ENCODE measurements at regions of chr12 and their contacts with region 1.

Region 1: DNA sequence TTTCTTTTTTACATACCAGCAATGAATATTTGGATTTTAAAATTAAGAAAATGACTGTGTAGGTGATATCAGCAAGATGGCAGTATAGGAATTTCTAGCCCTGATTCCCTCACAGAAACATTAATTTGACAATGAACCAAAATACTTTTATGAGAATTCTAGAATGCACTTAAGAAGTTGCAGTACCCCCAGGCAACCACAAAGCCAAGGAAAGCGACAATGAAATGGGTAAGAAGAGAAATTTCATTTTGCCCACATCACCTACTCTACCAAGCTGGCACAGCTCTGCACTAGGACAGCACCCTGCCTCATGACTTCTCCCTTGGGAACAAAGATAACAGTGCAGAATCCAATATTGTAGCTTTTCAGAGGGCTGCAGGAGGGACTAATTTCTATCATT is 6.6 kb downstream of the OR9K2 start:
- DNase-seq: no peak
- ATAC-seq: no peak
- H3K4me3 ChIP-seq: no peak overlapping the region
- H3K4me3 Mint-ChIP-seq: no peak overlapping the region
- H3K27ac ChIP-seq: no peak overlapping the region
- H3K27ac Mint-ChIP-seq: no peak overlapping the region
- H3K4me1 ChIP-seq: no peaks in the 10 kb centered on the region
- H3K4me1 Mint-ChIP-seq: no peaks in the 10 kb centered on the region
- H3K27me3 ChIP-seq: peaks cover 5 to 8% of the 10 kb centered on the region in 2 experiments
- H3K27me3 Mint-ChIP-seq: peaks cover 39 to 47% of the 10 kb centered on the region in 2 donors

Region 2: DNA sequence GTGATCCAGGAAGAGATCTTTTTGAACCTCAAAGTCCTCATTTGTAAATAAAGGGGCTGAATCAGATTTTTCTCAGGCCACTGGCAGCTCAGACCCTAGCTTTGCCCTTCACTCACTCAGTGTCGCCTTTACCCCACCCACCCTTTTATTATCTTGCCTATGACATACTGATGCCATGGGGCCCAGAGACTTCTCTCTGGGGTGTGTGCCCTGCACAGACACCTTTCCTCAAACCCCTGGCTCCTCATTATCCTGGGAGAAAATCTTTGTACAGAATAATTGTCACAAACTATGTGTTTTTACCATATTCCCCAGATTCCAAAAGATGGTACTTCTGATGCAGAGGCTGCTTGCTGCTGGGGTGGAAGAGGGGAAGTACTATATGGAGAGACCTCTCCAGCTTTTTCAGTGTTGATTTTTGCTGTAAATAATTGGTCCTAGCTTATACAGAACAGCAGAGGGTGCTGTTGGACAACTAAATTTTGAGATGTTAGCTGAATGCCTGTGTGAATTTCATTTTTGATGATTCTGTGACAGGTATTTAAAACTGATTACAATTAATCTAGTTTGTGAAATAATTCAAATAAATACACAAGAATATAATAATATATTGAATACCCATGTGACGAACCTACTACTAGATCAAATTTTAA is 430.8 kb before region 1 on chr12:
- CTCF ChIA-PET with region 1: interaction called in 1 of 2 experiments, 10 read pairs
- POLR2A ChIA-PET with region 1: no interaction called
- DNase-seq: peak in 11 of 35 experiments; percentile 4 to 81 (median 11)
- ATAC-seq: peak; percentile 48 to 55 (median 51)
- H3K4me3 ChIP-seq: no peak overlapping the region
- H3K4me3 Mint-ChIP-seq: no peak overlapping the region
- H3K27ac ChIP-seq: no peak overlapping the region
- H3K27ac Mint-ChIP-seq: no peak overlapping the region
- H3K4me1 ChIP-seq: no peaks in the 10 kb centered on the region
- H3K4me1 Mint-ChIP-seq: no peaks in the 10 kb centered on the region
- H3K27me3 ChIP-seq: peaks cover 0 to 3% of the 10 kb centered on the region in 2 experiments
- H3K27me3 Mint-ChIP-seq: peaks cover 8 to 12% of the 10 kb centered on the region in 2 donors

Region 3: DNA sequence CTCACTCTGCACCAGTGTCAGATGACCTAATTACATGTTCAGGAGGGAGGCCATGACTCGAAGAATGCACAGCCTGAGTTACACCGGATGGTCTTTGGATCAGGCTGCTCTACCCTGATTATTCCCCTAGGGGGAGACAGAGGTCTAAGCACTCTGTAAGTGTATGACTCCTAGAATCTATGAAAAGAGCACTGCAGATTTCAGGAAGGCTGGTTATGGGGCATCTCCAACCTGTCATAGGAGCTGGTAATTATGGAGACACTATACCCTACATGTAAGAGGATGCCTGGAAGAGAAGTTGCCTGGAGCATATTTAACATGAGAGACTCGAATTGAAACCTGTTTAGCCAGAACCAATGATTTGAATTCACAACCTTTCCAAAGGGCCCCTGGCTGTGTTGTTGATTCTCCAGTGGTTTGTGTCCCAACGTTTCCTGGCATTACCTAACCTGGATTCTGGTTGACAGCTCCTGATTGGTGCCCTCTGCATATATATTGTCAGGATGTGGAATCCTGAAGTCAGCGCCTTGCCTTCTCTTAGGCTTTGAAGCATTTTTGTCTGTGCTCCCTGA is 278.7 kb before region 1 on chr12 and contains the start of gene MUCL1:
- CTCF ChIA-PET with region 1: no interaction called
- POLR2A ChIA-PET with region 1: no interaction called
- DNase-seq: peak; percentile 24 to 84 (median 58)
- ATAC-seq: peak; percentile 97 to 100 (median 98)
- H3K4me3 ChIP-seq: no peak within 1 kb of the TSS
- H3K4me3 Mint-ChIP-seq: no peak within 1 kb of the TSS
- H3K27ac ChIP-seq: no peak within 1 kb of the TSS
- H3K27ac Mint-ChIP-seq: no peak within 1 kb of the TSS
- H3K4me1 ChIP-seq: no peaks in the 10 kb centered on the region
- H3K4me1 Mint-ChIP-seq: peaks cover 2 to 5% (median 2%) of the 10 kb centered on the region in 3 donors
- H3K27me3 ChIP-seq: no peaks in the 10 kb centered on the region
- H3K27me3 Mint-ChIP-seq: peaks cover 0 to 4% of the 10 kb centered on the region in 2 donors
- total RNA-seq, gene MUCL1: not detected

Measured in T-cell (primary cell).